Mammary epithelial cell (primary cell): ENCODE measurements at regions of chr22 and their contacts with region 1.

Region 1: DNA sequence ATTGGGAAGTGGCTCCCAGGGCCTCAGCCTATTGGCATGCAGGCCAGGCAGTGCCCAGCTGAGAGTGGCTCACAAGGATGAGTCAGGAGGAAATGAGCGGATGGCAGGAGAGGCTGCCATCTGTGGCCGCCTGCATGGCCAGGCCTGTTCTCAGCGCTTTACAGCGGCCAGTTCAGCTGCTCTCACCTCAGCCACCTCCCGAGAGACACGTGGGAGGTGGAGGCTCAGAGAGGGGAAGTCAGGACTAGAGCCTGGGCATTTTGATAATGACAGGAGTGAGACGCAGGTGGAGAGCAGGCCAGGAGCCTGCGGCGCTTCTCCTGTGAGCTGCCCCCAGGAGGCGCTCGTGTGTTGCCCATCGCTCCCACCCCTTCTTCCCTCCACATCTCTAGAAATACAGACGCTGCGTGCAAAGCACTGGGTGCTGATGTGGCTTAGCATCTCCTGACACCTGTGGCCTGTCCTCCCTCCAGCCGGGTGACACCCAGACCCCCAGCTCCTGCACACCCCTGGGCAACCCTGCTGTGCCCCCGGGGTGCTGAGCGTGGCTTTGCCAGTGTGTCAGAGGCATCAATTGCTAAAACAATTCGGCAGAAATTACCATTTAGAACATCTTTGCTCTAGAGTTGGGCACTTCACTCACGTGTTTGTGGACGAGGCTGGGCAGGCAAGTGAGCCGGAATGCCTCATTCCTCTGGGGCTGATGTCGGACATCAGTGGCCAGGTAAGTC is 21.4 kb upstream of the PANX2 start:
- DNase-seq: peak; percentile 98
- H3K4me3 ChIP-seq: no peak overlapping the region
- H3K27ac ChIP-seq: no peak overlapping the region
- H3K4me1 ChIP-seq: peaks cover 13% of the 10 kb centered on the region
- H3K27me3 ChIP-seq: no peaks in the 10 kb centered on the region
- CTCF ChIP-seq: peak; percentile 93 to 94

Region 2: GRCh38 chr22:49930739-49931412 is 218.3 kb before region 1 on chr22:
- CTCF ChIA-PET with region 1: no interaction called
- dilution Hi-C with region 1: no loop called
- in situ Hi-C with region 1: no loop called
- intact Hi-C with region 1: loop called (anchors 1 kb)
- DNase-seq: peak; percentile 69
- H3K4me3 ChIP-seq: no peak overlapping the region
- H3K27ac ChIP-seq: no peak overlapping the region
- H3K4me1 ChIP-seq: peaks cover 13% of the 10 kb centered on the region
- H3K27me3 ChIP-seq: no peaks in the 10 kb centered on the region
- CTCF ChIP-seq: peak; percentile 20 to 73

Region 3: DNA sequence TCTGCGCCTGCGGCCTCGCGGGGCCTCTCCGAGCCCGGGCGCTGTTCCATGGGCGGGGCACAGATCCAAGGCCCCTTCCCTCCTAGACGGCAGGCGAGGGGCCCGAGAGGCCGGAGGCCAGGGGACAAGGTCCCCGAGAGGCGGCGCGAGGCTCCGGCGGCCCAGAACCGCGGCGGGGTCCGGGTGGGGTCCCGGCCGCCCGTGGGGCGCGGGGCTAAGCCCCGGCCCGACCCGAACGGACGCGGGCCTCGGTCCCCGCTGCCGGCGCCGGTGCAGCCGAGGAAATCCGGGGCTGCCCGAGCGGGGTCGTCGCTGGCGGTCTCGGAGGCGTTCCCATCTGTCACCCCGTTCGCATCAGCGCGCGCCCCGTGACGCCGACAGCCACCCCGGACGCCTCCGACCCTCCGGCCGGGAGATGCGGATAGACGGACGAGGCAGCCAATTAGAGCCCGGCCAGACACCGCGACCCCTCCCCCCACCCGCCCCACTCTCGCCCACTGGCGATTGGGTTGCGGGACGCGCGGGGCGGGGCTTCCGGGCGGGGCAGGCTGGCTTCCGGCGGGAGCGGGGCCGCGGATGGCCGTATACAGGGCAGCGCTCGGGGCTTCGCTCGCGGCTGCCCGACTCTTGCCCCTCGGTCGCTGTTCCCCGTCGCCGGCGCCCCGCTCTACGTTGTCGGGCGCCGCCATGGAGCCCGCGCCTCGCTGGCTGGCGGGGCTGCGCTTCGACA is 51.5 kb after region 1 on chr22 and contains the start of gene SELENOO:
- CTCF ChIA-PET with region 1: no interaction called
- dilution Hi-C with region 1: no loop called
- in situ Hi-C with region 1: loop called in 1 of 2 experiments (anchors 10 kb)
- intact Hi-C with region 1: loop called (anchors 2 kb)
- DNase-seq: peak; percentile 85
- H3K4me3 ChIP-seq: peak within 1 kb of the TSS; percentile 63 to 86 (median 78)
- H3K27ac ChIP-seq: peak within 1 kb of the TSS; percentile 7
- H3K4me1 ChIP-seq: peaks cover 14% of the 10 kb centered on the region
- H3K27me3 ChIP-seq: no peaks in the 10 kb centered on the region
- CTCF ChIP-seq: no peak
- total RNA-seq, gene SELENOO: 21.5 to 36.9 TPM

Region 4: DNA sequence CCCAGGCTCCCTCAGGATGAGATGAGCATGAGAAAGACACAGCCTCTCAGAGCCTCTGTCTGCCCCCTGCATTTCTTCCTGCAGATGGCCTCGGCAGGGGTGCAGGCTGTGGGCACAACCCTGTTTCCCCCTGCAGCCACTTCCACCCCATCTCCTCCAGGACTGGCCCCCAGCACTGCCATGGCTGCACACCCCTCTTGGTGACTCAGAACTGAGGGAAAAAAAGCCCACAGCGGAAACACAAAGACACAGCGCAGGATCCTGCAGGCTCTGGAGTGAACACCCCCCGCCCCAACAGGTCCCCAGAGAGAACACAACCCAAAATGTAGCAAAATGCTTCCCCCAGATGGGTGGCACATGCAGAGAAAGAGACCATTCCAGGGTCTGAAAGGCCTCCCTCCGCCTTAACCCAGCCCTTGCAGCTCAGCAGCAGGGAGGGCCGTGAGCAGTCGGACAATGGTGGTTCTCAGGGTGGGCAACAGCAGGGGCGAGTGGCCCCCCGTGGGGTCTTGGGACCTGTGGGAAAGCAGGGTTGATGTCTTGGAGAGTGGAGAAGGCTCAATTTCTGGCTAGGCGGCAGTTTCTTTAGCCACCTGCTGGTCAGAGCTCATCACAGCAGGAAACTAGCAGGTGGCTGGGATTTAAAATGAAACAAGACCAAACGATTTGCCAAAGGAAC is 87.7 kb after region 1 on chr22:
- CTCF ChIA-PET with region 1: interaction called, 3 read pairs
- dilution Hi-C with region 1: no loop called
- in situ Hi-C with region 1: no loop called
- intact Hi-C with region 1: loop called (anchors 1 kb)
- DNase-seq: no peak
- H3K4me3 ChIP-seq: no peak overlapping the region
- H3K27ac ChIP-seq: no peak overlapping the region
- H3K4me1 ChIP-seq: peaks cover 5% of the 10 kb centered on the region
- H3K27me3 ChIP-seq: no peaks in the 10 kb centered on the region
- CTCF ChIP-seq: peak; percentile 50 to 51

Region 5: GRCh38 chr22:50341977-50342650 is 193.0 kb after region 1 on chr22:
- CTCF ChIA-PET with region 1: no interaction called
- dilution Hi-C with region 1: no loop called
- in situ Hi-C with region 1: no loop called
- intact Hi-C with region 1: loop called (anchors 1 kb)
- DNase-seq: peak; percentile 75
- H3K4me3 ChIP-seq: peak overlapping the region; percentile 51 to 61 (median 55)
- H3K27ac ChIP-seq: no peak overlapping the region
- H3K4me1 ChIP-seq: peaks cover 7% of the 10 kb centered on the region
- H3K27me3 ChIP-seq: no peaks in the 10 kb centered on the region
- CTCF ChIP-seq: peak; percentile 99

Region 6: GRCh38 chr22:50620593-50621355 is 471.6 kb after region 1 on chr22:
- CTCF ChIA-PET with region 1: no interaction called
- dilution Hi-C with region 1: no loop called
- in situ Hi-C with region 1: no loop called
- intact Hi-C with region 1: loop called (anchors 5 kb)
- DNase-seq: peak; percentile 63
- H3K4me3 ChIP-seq: peak overlapping the region in 2 of 3 experiments; percentile 15 to 39
- H3K27ac ChIP-seq: peak overlapping the region; percentile 0
- H3K4me1 ChIP-seq: peaks cover 34% of the 10 kb centered on the region
- H3K27me3 ChIP-seq: no peaks in the 10 kb centered on the region
- CTCF ChIP-seq: no peak